ENCODE measurements at regions of chrX and their contacts with region 1.

Region 1: GRCh38 chrX:18390941-18391538 is 34.4 kb upstream of the CDKL5 start:
- DNase-seq: peak; percentile 36 to 80
- ATAC-seq: peak in 2 of 3 donors; percentile 52 to 74
- H3K4me3 ChIP-seq: no peak overlapping the region
- H3K4me3 Mint-ChIP-seq: no peak overlapping the region
- H3K27ac ChIP-seq: no peak overlapping the region
- H3K27ac Mint-ChIP-seq: no peak overlapping the region
- H3K4me1 ChIP-seq: no peaks in the 10 kb centered on the region
- H3K4me1 Mint-ChIP-seq: peaks cover 5 to 7% of the 10 kb centered on the region in 2 donors
- H3K27me3 ChIP-seq: no peaks in the 10 kb centered on the region
- H3K27me3 Mint-ChIP-seq: no peaks in the 10 kb centered on the region
- CTCF ChIP-seq: peak; percentile 61

Region 2: DNA sequence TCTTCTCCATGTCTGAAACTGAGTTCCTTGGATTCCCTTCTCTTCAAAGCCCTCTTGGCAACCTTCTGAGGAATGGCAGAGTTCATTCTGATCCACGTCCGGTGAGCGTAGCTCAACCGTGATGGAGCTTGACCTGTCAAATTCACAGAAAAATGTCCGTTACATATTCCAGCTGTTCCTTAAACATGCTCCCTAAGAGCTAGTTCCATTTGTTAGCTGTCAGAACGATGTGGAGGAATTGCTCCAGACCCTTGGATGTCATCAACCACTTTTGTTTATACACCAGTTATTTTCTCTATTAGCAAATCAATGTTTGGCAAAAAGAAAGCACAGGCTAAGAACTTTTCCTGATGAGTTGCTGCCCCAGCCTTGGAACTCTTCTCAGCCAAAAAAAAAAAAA is 965.9 kb before region 1 on chrX:
- intact Hi-C with region 1: no loop called
- DNase-seq: no peak
- ATAC-seq: no peak
- H3K4me3 ChIP-seq: no peak overlapping the region
- H3K4me3 Mint-ChIP-seq: no peak overlapping the region
- H3K27ac ChIP-seq: no peak overlapping the region
- H3K27ac Mint-ChIP-seq: no peak overlapping the region
- H3K4me1 ChIP-seq: no peaks in the 10 kb centered on the region
- H3K4me1 Mint-ChIP-seq: no peaks in the 10 kb centered on the region
- H3K27me3 ChIP-seq: no peaks in the 10 kb centered on the region
- H3K27me3 Mint-ChIP-seq: peaks cover 0 to 3% of the 10 kb centered on the region in 2 donors
- CTCF ChIP-seq: no peak

Region 3: GRCh38 chrX:18899796-18900447 is 508.9 kb after region 1 on chrX:
- intact Hi-C with region 1: loop called (anchors 5 kb)
- DNase-seq: peak in 1 of 2 donors; percentile 31
- ATAC-seq: no peak
- H3K4me3 ChIP-seq: no peak overlapping the region
- H3K4me3 Mint-ChIP-seq: no peak overlapping the region
- H3K27ac ChIP-seq: no peak overlapping the region
- H3K27ac Mint-ChIP-seq: no peak overlapping the region
- H3K4me1 ChIP-seq: no peaks in the 10 kb centered on the region
- H3K4me1 Mint-ChIP-seq: no peaks in the 10 kb centered on the region
- H3K27me3 ChIP-seq: no peaks in the 10 kb centered on the region
- H3K27me3 Mint-ChIP-seq: no peaks in the 10 kb centered on the region
- CTCF ChIP-seq: no peak

Region 4: GRCh38 chrX:19225924-19226323 is 834.9 kb after region 1 on chrX:
- intact Hi-C with region 1: loop called (anchors 5 kb)
- DNase-seq: peak in 1 of 2 donors; percentile 24
- ATAC-seq: no peak
- H3K4me3 ChIP-seq: no peak overlapping the region
- H3K4me3 Mint-ChIP-seq: no peak overlapping the region
- H3K27ac ChIP-seq: no peak overlapping the region
- H3K27ac Mint-ChIP-seq: no peak overlapping the region
- H3K4me1 ChIP-seq: no peaks in the 10 kb centered on the region
- H3K4me1 Mint-ChIP-seq: no peaks in the 10 kb centered on the region
- H3K27me3 ChIP-seq: no peaks in the 10 kb centered on the region
- H3K27me3 Mint-ChIP-seq: peaks cover 3 to 19% of the 10 kb centered on the region in 2 donors
- CTCF ChIP-seq: no peak

Region 5: GRCh38 chrX:19237901-19238300 is 846.9 kb after region 1 on chrX:
- intact Hi-C with region 1: no loop called
- DNase-seq: no peak
- ATAC-seq: no peak
- H3K4me3 ChIP-seq: no peak overlapping the region
- H3K4me3 Mint-ChIP-seq: no peak overlapping the region
- H3K27ac ChIP-seq: no peak overlapping the region
- H3K27ac Mint-ChIP-seq: no peak overlapping the region
- H3K4me1 ChIP-seq: no peaks in the 10 kb centered on the region
- H3K4me1 Mint-ChIP-seq: no peaks in the 10 kb centered on the region
- H3K27me3 ChIP-seq: no peaks in the 10 kb centered on the region
- H3K27me3 Mint-ChIP-seq: peaks cover 7 to 12% of the 10 kb centered on the region in 2 donors
- CTCF ChIP-seq: no peak

Region 6: DNA sequence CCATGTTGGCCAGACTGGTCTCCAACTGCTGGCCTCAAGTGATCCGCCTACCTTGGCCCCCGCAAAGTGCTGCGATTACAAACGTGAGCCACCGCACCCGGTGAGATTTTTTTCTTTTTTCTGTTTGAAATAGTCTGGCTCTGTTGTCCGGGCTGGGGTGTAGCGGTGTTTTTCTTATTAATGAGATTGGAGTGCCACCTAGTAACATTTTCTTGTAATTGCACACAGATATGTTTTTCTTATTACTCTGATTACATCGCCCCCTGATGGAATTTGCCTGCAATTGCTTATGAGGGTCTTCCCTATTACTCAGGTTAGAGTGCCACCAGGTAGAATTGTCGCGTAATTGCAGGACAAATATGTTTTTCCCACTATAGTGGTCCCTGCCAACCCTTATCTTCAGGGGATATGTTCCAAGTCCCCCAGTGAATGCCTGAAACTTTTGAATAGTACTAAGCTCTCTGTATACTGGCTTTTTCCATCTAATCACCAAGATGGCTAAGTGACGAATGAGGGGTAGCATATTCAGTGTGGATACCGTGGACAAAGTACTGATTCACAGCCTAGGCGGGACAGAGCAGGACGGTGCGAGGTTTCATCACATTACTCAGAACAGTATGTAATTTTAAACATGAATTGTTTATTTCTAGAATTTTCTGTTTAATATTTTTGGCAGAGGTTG is 944.0 kb after region 1 on chrX:
- intact Hi-C with region 1: loop called (anchors 1 kb)
- DNase-seq: peak in 1 of 2 donors; percentile 41
- ATAC-seq: peak in 2 of 3 donors; percentile 16 to 45
- H3K4me3 ChIP-seq: no peak overlapping the region
- H3K4me3 Mint-ChIP-seq: no peak overlapping the region
- H3K27ac ChIP-seq: no peak overlapping the region
- H3K27ac Mint-ChIP-seq: no peak overlapping the region
- H3K4me1 ChIP-seq: no peaks in the 10 kb centered on the region
- H3K4me1 Mint-ChIP-seq: peaks cover 0 to 4% of the 10 kb centered on the region in 2 donors
- H3K27me3 ChIP-seq: no peaks in the 10 kb centered on the region
- H3K27me3 Mint-ChIP-seq: peaks cover 0 to 6% of the 10 kb centered on the region in 2 donors
- CTCF ChIP-seq: no peak

Measured in natural killer cell (primary cell).